Panc1 (cell line): ENCODE measurements at regions of chr10 and their contacts with region 1.

Region 1: GRCh38 chr10:50807851-50808776 is 68.4 kb downstream of the ASAH2B start:
- DNase-seq: no peak
- ATAC-seq: no peak
- H3K4me3 ChIP-seq: no peak overlapping the region
- H3K27ac ChIP-seq: no peak overlapping the region
- H3K4me1 ChIP-seq: no peaks in the 10 kb centered on the region
- H3K27me3 ChIP-seq: peaks cover 5% of the 10 kb centered on the region
- CTCF ChIP-seq: no peak

Region 2: GRCh38 chr10:50788951-50789945 is 18.9 kb before region 1 on chr10:
- CTCF ChIA-PET with region 1: no interaction called
- POLR2A ChIA-PET with region 1: no interaction called
- in situ Hi-C with region 1: no loop called
- intact Hi-C with region 1: no loop called
- DNase-seq: peak; percentile 5
- ATAC-seq: peak; percentile 93
- H3K4me3 ChIP-seq: no peak overlapping the region
- H3K27ac ChIP-seq: no peak overlapping the region
- H3K4me1 ChIP-seq: no peaks in the 10 kb centered on the region
- H3K27me3 ChIP-seq: peaks cover 4% of the 10 kb centered on the region; the same call in 1 of the 2 replicates
- CTCF ChIP-seq: peak; percentile 69

Region 3: GRCh38 chr10:50837095-50837494 is 29.0 kb after region 1 on chr10:
- CTCF ChIA-PET with region 1: no interaction called
- POLR2A ChIA-PET with region 1: interaction called, 13 read pairs
- in situ Hi-C with region 1: no loop called
- intact Hi-C with region 1: no loop called
- DNase-seq: no peak
- ATAC-seq: no peak
- H3K4me3 ChIP-seq: no peak overlapping the region
- H3K27ac ChIP-seq: no peak overlapping the region
- H3K4me1 ChIP-seq: no peaks in the 10 kb centered on the region
- H3K27me3 ChIP-seq: peaks cover 17% of the 10 kb centered on the region
- CTCF ChIP-seq: no peak